ENCODE measurements at regions of chr5 and their contacts with region 1.

Region 1: GRCh38 chr5:157718519-157718918 is 12.7 kb upstream of the THG1L start:
- DNase-seq: peak; percentile 28
- ATAC-seq: peak; percentile 98
- H3K4me3 ChIP-seq: no peak overlapping the region
- H3K27ac ChIP-seq: no peak overlapping the region
- H3K4me1 ChIP-seq: peaks cover 4% of the 10 kb centered on the region
- H3K27me3 ChIP-seq: no peaks in the 10 kb centered on the region
- CTCF ChIP-seq: peak; percentile 54 to 71 (median 57); a peak in 5 of 6 replicates
- EP300 ChIP-seq: no peak
- POLR2A ChIP-seq: no peak
- RAD21 ChIP-seq: peak; percentile 86

Region 2: GRCh38 chr5:157431544-157432200 is 286.8 kb before region 1 on chr5:
- CTCF ChIA-PET with region 1: interaction called, 90 read pairs
- POLR2A ChIA-PET with region 1: no interaction called
- RAD21 ChIA-PET with region 1: interaction called, 72 read pairs
- SMC1A ChIA-PET with region 1: interaction called, 77 read pairs
- in situ Hi-C with region 1: loop called (anchors 5 kb)
- intact Hi-C with region 1: loop called (anchors 1 kb)
- DNase-seq: peak; percentile 35
- ATAC-seq: peak; percentile 99
- H3K4me3 ChIP-seq: no peak overlapping the region
- H3K27ac ChIP-seq: no peak overlapping the region
- H3K4me1 ChIP-seq: no peaks in the 10 kb centered on the region
- H3K27me3 ChIP-seq: no peaks in the 10 kb centered on the region
- CTCF ChIP-seq: peak; percentile 47 to 65 (median 56); a peak in 5 of 6 replicates
- EP300 ChIP-seq: no peak
- POLR2A ChIP-seq: no peak
- RAD21 ChIP-seq: peak; percentile 85

Region 3: DNA sequence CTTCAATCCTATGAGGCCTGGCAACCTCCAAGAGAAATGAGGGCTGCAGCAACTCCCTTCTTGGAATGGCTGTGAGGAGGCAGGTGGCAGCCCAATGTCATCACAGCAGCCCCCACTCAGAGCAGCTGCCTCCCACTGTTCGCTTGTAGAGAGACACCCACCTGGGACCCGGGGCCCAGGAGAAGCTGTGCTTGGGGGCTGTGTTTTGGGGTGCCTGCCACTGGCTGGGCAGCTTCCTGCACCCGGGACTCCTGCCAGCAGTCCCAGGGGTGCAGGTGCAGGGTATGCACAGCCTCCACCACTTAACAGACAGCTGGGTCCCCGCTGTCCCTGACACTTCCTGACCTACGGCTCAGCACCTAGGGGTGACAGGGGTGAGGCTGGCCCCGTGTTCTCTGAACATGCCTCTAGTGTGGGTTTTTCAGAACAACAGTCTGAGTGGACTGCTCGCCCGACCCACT is 232.3 kb before region 1 on chr5:
- CTCF ChIA-PET with region 1: interaction called, 11 read pairs
- POLR2A ChIA-PET with region 1: no interaction called
- RAD21 ChIA-PET with region 1: no interaction called
- SMC1A ChIA-PET with region 1: interaction called, 4 read pairs
- in situ Hi-C with region 1: no loop called
- intact Hi-C with region 1: no loop called
- DNase-seq: no peak
- ATAC-seq: peak; percentile 43
- H3K4me3 ChIP-seq: no peak overlapping the region
- H3K27ac ChIP-seq: peak overlapping the region; percentile 24
- H3K4me1 ChIP-seq: peaks cover 29% of the 10 kb centered on the region
- H3K27me3 ChIP-seq: no peaks in the 10 kb centered on the region
- CTCF ChIP-seq: no peak
- EP300 ChIP-seq: no peak
- POLR2A ChIP-seq: no peak
- RAD21 ChIP-seq: no peak

Region 4: GRCh38 chr5:157575381-157576020 is 143.0 kb before region 1 on chr5 and contains the start of gene ADAM19:
- CTCF ChIA-PET with region 1: interaction called, 16 read pairs
- POLR2A ChIA-PET with region 1: interaction called, 7 read pairs
- RAD21 ChIA-PET with region 1: no interaction called
- SMC1A ChIA-PET with region 1: interaction called, 10 read pairs
- in situ Hi-C with region 1: no loop called
- intact Hi-C with region 1: loop called (anchors 2 kb)
- DNase-seq: no peak
- ATAC-seq: peak; percentile 77
- H3K4me3 ChIP-seq: peak within 1 kb of the TSS; percentile 75
- H3K27ac ChIP-seq: peak within 1 kb of the TSS; percentile 67
- H3K4me1 ChIP-seq: peaks cover 51% of the 10 kb centered on the region
- H3K27me3 ChIP-seq: no peaks in the 10 kb centered on the region
- CTCF ChIP-seq: no peak
- EP300 ChIP-seq: no peak
- POLR2A ChIP-seq: peak; percentile 79
- RAD21 ChIP-seq: no peak
- polyA plus RNA-seq, gene ADAM19: 16.0 to 24.4 TPM

Region 5: DNA sequence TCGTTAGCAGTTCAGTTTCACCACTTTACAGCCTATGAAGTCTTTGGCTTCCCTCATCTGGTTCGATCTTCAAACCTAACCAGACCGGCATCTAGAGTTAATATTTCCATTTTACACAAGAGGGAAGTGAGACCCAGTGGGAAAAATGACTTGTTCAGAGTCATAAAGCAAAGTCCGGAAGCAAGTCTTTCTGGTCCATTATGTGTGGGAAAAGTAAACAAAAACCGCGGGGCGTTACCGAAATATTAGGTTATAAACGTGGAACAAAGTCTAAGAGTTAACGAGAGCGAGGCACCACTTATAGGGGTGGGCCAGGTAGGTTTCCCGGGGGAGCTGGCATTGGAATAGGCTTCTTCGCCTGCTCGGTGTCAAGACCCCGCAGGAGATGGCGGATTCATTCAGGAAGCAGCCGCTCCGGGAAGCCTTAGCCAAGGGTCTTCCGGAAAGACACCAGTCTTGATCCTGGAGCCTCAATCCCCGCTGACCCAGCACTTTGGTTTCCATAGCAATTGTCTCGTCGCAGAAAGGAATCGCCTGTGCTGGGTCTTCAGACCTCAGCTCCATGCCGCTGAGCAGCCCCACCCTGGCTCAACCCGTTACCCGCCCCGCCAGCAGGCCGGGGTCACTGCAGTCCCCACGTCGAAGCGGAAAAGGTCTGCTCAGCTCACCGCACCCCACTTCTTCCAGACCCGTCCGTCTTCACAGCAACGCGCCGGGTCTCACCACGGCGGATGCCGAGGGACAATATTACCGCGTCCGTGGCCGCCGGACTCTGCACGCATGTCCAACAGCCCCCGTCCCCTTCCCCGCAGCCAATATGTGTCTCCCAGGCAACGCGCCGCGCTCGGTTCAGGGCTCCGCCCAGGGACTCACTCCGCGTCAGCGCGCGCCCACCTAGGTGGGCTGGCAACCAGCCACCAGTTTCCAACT is 47.6 kb before region 1 on chr5 and contains the start of gene C5orf52:
- CTCF ChIA-PET with region 1: interaction called, 44 read pairs
- POLR2A ChIA-PET with region 1: interaction called, 3 read pairs
- RAD21 ChIA-PET with region 1: interaction called, 30 read pairs
- SMC1A ChIA-PET with region 1: interaction called, 52 read pairs
- in situ Hi-C with region 1: no loop called
- intact Hi-C with region 1: loop called (anchors 1 kb)
- DNase-seq: peak; percentile 23
- ATAC-seq: peak; percentile 72
- H3K4me3 ChIP-seq: peak within 1 kb of the TSS; percentile 68
- H3K27ac ChIP-seq: no peak within 1 kb of the TSS
- H3K4me1 ChIP-seq: peaks cover 5% of the 10 kb centered on the region
- H3K27me3 ChIP-seq: no peaks in the 10 kb centered on the region; a peak in 3 of 4 replicates
- CTCF ChIP-seq: no peak
- EP300 ChIP-seq: no peak
- POLR2A ChIP-seq: no peak
- RAD21 ChIP-seq: 0 out of 2 replicates have a peak, but pooled peaks have one; percentile 3
- polyA plus RNA-seq, gene C5orf52: not detected

Region 6: GRCh38 chr5:157772127-157772526 is 53.6 kb after region 1 on chr5:
- CTCF ChIA-PET with region 1: no interaction called
- POLR2A ChIA-PET with region 1: no interaction called
- RAD21 ChIA-PET with region 1: no interaction called
- SMC1A ChIA-PET with region 1: no interaction called
- in situ Hi-C with region 1: no loop called
- intact Hi-C with region 1: no loop called
- DNase-seq: no peak
- ATAC-seq: peak; percentile 75
- H3K4me3 ChIP-seq: no peak overlapping the region
- H3K27ac ChIP-seq: no peak overlapping the region
- H3K4me1 ChIP-seq: no peaks in the 10 kb centered on the region
- H3K27me3 ChIP-seq: no peaks in the 10 kb centered on the region; a peak in 1 of 4 replicates
- CTCF ChIP-seq: no peak
- EP300 ChIP-seq: no peak
- POLR2A ChIP-seq: no peak
- RAD21 ChIP-seq: no peak